Common myeloid progenitor, CD34-positive (primary cell): ENCODE measurements at regions of chr4 and their contacts with region 1.

Region 1: GRCh38 chr4:181528570-181529184 is 714.5 kb upstream of the TENM3 start:
- DNase-seq: peak; percentile 23 to 61 (median 52)
- H3K4me3 ChIP-seq: no peak overlapping the region
- H3K27ac ChIP-seq: no peak overlapping the region
- H3K4me1 ChIP-seq: no peaks in the 10 kb centered on the region
- H3K27me3 ChIP-seq: peaks cover 0 to 3% (median 0%) of the 10 kb centered on the region in 5 experiments

Region 2: GRCh38 chr4:181517491-181517890 is 11.2 kb before region 1 on chr4:
- CTCF ChIA-PET with region 1: interaction called, 11 read pairs
- POLR2A ChIA-PET with region 1: no interaction called
- DNase-seq: no peak
- H3K4me3 ChIP-seq: no peak overlapping the region
- H3K27ac ChIP-seq: no peak overlapping the region
- H3K4me1 ChIP-seq: no peaks in the 10 kb centered on the region
- H3K27me3 ChIP-seq: no peaks in the 10 kb centered on the region

Region 3: GRCh38 chr4:181796502-181796901 is 267.8 kb after region 1 on chr4:
- CTCF ChIA-PET with region 1: no interaction called
- POLR2A ChIA-PET with region 1: no interaction called
- DNase-seq: no peak
- H3K4me3 ChIP-seq: no peak overlapping the region
- H3K27ac ChIP-seq: no peak overlapping the region
- H3K4me1 ChIP-seq: no peaks in the 10 kb centered on the region
- H3K27me3 ChIP-seq: no peaks in the 10 kb centered on the region